ENCODE measurements at regions of chr17 and their contacts with region 1.

Region 1: DNA sequence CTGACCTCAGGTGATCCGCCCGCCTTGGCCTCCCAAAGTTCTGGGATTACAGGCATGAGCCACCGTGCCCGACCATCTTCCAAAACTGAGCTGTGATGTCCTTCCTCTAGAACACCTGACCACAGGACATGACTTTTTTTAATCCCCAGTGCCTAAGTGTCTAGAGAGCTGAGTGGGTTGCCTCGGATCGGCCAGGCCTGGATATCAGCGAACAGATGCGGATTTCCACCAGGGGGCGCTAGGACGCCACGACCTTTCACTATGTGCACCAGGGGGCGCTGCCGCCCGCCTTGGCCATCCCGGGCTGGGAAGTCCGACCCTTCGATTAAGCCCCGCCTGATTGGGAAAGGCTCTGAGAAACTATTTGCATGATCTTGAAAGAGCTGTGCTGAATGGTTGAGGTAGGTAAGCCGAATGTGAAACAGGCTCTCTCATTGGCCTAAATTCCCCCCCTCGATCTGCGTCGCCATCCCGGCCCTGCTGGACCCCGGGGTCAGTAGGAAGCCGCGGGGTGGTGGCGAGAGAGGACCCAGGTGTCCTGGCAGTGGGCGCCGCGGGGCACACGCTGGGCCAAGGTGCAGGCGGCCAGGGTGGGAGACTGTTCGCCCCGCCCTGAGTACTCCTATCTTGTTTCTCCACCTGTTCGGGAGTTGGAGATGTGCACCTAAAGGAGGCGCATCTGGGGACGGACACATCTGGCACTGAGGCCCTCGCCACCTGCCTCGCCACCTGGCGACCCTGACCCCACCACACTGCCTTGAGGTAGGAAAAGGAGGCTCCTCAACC is at the start of gene ACBD4:
- DNase-seq: peak; percentile 96 to 97
- H3K4me3 ChIP-seq: peak within 1 kb of the TSS; percentile 29 to 47 (median 41)
- H3K27ac ChIP-seq: peak within 1 kb of the TSS in 2 of 3 donors; percentile 24 to 84
- H3K4me1 ChIP-seq: peaks cover 19 to 31% of the 10 kb centered on the region in 2 donors
- H3K27me3 ChIP-seq: no peaks in the 10 kb centered on the region
- CTCF ChIP-seq: peak; percentile 99 to 100 (median 100)
- POLR2A ChIP-seq: peak in 1 of 2 donors; percentile 68
- total RNA-seq, gene ACBD4: 16.7 to 20.4 (median 17.7) TPM

Region 2: GRCh38 chr17:44775136-44775837 is 360.1 kb before region 1 on chr17:
- intact Hi-C with region 1: loop called (anchors 5 kb)
- DNase-seq: peak; percentile 97 to 98
- H3K4me3 ChIP-seq: peak overlapping the region in 2 of 3 donors; percentile 19 to 42
- H3K27ac ChIP-seq: no peak overlapping the region
- H3K4me1 ChIP-seq: peaks cover 13 to 22% of the 10 kb centered on the region in 2 donors
- H3K27me3 ChIP-seq: no peaks in the 10 kb centered on the region
- CTCF ChIP-seq: peak in 1 of 6 experiments; percentile 11
- POLR2A ChIP-seq: peak in 1 of 2 donors; percentile 25

Region 3: DNA sequence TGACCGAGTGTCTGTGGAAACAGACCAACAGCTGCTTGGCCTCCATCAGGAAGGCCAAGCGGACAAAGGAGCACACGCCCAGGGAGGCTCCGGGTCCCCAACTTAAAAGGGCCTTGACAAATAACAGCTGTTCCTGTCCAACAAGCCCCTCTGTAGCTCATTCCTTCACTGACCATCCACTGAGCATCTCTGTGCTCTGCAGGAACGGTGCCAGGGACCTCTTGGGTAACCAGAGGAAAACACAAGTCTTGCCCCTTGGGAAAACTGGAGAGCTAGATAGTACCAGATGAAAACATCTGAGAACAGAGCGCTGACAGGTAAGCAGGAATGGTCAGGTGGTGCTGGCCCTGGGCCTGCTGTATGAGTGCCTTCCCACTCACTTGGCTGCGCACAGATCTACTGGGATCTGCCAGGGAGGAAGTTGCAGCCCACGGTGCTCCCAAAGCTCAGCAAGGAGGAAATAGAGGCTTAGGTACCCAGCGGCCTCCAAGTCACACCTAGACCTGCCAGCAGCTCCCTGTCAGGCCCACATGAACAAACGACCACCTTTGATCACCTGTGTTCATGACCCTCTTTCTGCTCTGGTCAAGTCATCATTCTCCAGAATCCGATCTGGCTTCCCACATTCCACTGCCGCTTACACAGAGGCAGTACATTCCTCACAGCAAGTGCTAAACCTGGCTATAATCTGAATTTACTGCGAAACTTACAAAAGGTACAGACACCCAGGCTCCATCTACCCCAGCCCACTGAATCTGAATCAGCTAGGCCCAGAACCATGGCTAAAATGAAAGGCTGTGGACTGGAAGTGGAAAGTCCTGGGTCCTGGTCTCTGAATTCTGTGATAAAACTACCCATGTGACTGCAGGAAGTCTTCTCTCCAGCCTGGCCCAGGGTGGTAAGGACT is 96.4 kb before region 1 on chr17:
- intact Hi-C with region 1: no loop called
- DNase-seq: peak; percentile 87 to 92
- H3K4me3 ChIP-seq: no peak overlapping the region
- H3K27ac ChIP-seq: peak overlapping the region; percentile 58 to 77 (median 65)
- H3K4me1 ChIP-seq: peaks cover 33 to 36% of the 10 kb centered on the region in 2 donors
- H3K27me3 ChIP-seq: no peaks in the 10 kb centered on the region
- CTCF ChIP-seq: no peak
- POLR2A ChIP-seq: peak in 1 of 2 donors; percentile 22

Region 4: DNA sequence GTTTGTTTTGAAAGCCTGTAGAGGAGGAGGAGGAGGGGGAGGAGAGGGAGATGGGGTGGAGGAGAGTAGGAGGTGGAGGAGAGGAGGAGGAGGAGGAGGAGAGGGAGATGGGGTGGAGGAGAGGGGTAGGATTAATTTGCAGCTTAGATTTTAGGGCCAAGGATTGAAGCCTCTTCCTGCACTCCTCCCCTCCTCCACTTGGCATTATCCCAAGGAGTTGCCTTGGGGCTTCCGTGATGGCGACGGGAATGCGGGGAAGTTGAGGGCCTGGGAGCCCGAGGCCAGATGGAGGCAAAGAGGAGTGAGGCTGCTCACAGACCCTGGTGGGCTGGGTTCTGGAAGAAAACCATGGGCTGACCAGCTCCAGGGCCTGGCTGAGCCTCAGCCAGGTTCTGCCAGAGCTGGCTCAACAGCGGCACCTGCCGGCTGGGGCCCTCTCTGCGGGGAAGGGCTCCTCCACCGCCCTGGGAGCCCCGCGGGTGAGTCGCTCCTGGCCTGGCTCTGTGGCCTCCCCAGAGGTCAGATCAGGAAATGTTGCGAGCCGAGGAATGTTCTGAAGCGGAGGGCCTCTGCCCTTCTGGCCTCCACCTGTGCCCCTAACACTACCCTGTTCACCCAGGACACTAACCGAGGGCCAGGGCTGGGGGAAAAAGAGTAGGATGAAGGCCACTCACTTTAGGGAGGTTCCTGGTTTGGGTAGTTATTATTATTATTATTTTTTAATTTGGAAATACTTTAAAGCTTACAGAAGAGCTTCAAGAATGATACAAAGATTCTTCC is 62.4 kb after region 1 on chr17:
- intact Hi-C with region 1: loop called (anchors 5 kb)
- DNase-seq: peak; percentile 90 to 94
- H3K4me3 ChIP-seq: no peak overlapping the region
- H3K27ac ChIP-seq: peak overlapping the region; percentile 20 to 61 (median 60)
- H3K4me1 ChIP-seq: peaks cover 0 to 13% of the 10 kb centered on the region in 2 donors
- H3K27me3 ChIP-seq: no peaks in the 10 kb centered on the region
- CTCF ChIP-seq: peak; percentile 94 to 99 (median 99)
- POLR2A ChIP-seq: no peak

Region 5: GRCh38 chr17:45341533-45342158 is 206.3 kb after region 1 on chr17:
- intact Hi-C with region 1: no loop called
- DNase-seq: peak; percentile 22 to 48
- H3K4me3 ChIP-seq: no peak overlapping the region
- H3K27ac ChIP-seq: no peak overlapping the region
- H3K4me1 ChIP-seq: peaks cover 5 to 35% of the 10 kb centered on the region in 2 donors
- H3K27me3 ChIP-seq: no peaks in the 10 kb centered on the region
- CTCF ChIP-seq: no peak
- POLR2A ChIP-seq: no peak

Measured in thyroid gland (tissue), 4 donors.